AG04449 (cell line): ENCODE measurements at regions of chr12 and their contacts with region 1.

Region 1: GRCh38 chr12:104381731-104382480 is 74.8 kb upstream of the CHST11 start:
- DNase-seq: no peak
- H3K4me3 ChIP-seq: no peak overlapping the region
- CTCF ChIP-seq: peak; percentile 88

Region 2: GRCh38 chr12:104201238-104202001 is 180.5 kb before region 1 on chr12:
- CTCF ChIA-PET with region 1: interaction called, 15 read pairs
- POLR2A ChIA-PET with region 1: no interaction called
- DNase-seq: no peak
- H3K4me3 ChIP-seq: no peak overlapping the region
- CTCF ChIP-seq: peak; percentile 79

Region 3: DNA sequence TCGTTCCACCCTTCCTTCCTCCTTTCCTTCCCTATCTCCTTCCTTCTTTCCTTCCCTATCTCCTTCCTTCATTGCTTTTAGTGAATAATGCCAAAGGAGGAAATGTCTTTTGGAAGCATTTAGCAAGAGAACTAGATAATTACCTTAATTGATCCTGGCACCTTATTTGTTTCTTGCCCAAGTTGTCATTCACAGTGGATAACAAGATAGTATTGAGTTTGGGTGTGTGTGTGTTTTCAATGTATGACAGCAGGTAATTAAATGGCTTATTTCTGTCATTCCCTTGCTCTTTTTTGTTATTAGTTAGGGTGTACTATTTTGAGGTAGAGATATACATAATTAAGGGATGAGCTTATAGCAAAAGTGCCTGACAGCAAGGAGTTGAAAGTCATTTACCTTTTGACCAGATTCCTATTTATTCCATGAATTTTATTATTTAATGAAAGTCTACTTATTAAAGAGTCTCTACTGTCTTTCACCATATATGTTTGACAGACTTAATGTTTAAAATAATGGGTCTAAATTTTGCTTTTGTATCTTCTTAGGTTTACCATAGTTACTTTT is 48.1 kb before region 1 on chr12:
- CTCF ChIA-PET with region 1: no interaction called
- POLR2A ChIA-PET with region 1: no interaction called
- DNase-seq: no peak
- H3K4me3 ChIP-seq: no peak overlapping the region
- CTCF ChIP-seq: no peak

Region 4: GRCh38 chr12:104604070-104604994 is 222.4 kb after region 1 on chr12:
- CTCF ChIA-PET with region 1: interaction called, 10 read pairs
- POLR2A ChIA-PET with region 1: no interaction called
- DNase-seq: peak; percentile 85
- H3K4me3 ChIP-seq: peak overlapping the region; percentile 29; the same call in 1 of the 2 replicates
- CTCF ChIP-seq: no peak

Region 5: DNA sequence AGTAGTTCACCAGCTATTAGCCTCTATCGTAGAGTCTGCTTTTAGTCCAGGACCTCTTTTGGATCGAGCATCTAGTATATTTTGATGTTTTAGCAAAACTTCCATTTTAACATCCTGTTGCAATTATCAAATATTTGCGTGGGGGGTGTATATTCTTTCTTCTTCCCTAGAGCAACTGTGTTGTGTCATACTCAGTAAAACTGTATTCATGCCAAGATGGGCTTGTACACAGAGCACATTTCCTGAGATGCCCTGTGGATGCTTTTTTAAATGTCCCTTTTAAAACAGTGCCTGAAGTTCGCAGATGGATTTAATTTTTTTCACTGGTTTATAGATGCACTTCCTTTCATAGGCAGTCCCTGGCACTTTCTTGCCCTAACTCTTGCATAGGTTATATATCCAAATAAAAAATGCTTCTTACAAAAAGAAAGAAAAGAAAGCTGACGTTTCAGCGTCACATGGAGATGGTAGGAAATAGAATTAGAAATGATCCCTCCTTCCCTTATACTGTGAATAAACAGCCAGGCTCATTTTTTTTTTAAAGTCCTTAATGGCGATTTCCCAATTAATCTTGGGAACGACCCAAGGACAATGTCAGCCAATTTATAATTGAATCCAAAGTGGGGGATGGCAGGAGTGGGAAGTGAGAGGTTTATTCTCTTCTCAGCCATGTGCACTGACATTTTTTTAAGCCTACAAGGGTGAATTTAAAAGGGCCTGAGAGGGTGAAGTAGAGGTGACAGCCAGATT is 329.2 kb after region 1 on chr12:
- CTCF ChIA-PET with region 1: interaction called, 17 read pairs
- POLR2A ChIA-PET with region 1: no interaction called
- DNase-seq: peak; percentile 36
- H3K4me3 ChIP-seq: no peak overlapping the region
- CTCF ChIP-seq: no peak

Region 6: GRCh38 chr12:104865080-104865479 is 483.2 kb after region 1 on chr12:
- CTCF ChIA-PET with region 1: interaction called, 15 read pairs
- POLR2A ChIA-PET with region 1: no interaction called
- DNase-seq: no peak
- H3K4me3 ChIP-seq: no peak overlapping the region
- CTCF ChIP-seq: no peak

Region 7: GRCh38 chr12:104877123-104877705 is 495.3 kb after region 1 on chr12:
- CTCF ChIA-PET with region 1: interaction called, 144 read pairs
- POLR2A ChIA-PET with region 1: no interaction called
- DNase-seq: peak; percentile 9
- H3K4me3 ChIP-seq: no peak overlapping the region
- CTCF ChIP-seq: peak; percentile 60

Region 8: DNA sequence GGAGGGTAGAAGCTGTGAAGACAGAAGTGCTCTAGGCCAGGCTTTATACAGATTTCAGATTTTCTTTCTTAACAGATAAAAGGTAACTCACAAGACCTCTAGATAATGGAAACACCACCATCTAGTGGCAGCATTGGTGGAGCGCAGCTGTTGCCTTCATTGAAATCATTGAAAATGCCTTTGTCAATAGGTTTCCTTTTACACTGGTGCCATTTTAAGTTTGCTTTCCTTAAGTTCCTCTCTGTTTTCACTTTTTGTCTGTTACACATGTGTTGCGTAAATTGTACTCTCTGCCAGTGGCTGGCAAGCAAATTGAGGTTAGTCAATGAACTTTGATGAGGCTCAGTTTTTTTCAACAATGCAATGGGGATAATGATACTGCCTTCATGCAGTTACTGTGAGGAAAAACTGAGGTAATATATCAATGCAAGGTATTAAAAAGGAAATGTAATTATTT is 671.2 kb after region 1 on chr12:
- CTCF ChIA-PET with region 1: interaction called, 20 read pairs
- POLR2A ChIA-PET with region 1: no interaction called
- DNase-seq: peak; percentile 16
- H3K4me3 ChIP-seq: no peak overlapping the region
- CTCF ChIP-seq: peak; percentile 81